ENCODE measurements at regions of chr4 and their contacts with region 1.

Region 1: DNA sequence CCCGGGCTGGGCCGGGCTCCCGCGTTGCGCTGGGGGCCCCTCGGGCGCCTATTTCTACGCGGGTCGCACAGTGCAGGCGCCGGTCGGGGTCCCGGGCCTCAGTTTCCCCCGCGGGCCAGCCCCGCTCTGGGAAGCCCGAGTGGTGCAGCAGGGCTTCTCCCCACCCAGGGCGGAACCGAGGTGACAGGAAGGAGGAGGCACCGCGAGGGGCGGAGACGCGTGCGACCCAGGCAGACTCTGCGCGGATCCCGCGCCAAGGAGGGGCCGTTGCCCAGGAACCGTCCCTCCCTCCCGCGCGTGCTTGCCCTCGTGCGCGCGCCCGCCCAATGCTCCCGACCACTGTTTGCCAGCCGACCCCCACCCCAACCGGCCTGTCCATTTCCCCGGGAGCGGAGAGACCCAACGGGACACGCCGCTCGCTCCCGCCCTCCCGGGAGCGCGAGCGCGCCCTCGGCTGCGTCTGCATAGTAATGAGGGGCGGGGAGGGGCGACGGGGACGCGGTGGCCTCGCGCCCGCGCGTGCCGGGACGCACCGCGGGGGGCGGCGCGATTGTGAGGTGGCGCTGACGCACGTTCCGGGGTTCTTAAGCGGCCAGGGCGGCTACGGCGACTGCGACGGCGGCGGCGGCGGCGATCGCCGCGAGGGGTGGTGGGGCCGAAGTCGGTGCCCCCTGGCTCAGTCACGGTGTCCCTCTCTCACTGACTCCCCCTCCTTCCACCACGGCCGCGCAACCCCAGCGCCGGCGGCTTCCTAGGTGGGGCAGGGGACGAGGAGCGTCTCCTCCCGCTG is at the start of gene CPEB2:
- DNase-seq: peak; percentile 81 to 96 (median 86)
- ATAC-seq: peak; percentile 83
- H3K4me3 ChIP-seq: peak within 1 kb of the TSS; percentile 89
- H3K27ac ChIP-seq: peak within 1 kb of the TSS; percentile 98
- H3K4me1 ChIP-seq: peaks cover 8 to 30% of the 10 kb centered on the region in 2 experiments; a peak in 3 of 5 replicates
- H3K27me3 ChIP-seq: no peaks in the 10 kb centered on the region
- CTCF ChIP-seq: no peak
- EP300 ChIP-seq: no peak
- POLR2A ChIP-seq: peak; percentile 86
- RAD21 ChIP-seq: 0 out of 4 replicates have a peak, but pooled peaks of 1 of the 2 experiments have one; percentile 2
- polyA plus RNA-seq, gene CPEB2: 0.39 to 0.41 TPM

Region 2: GRCh38 chr4:14856076-14856933 is 145.8 kb before region 1 on chr4:
- CTCF ChIA-PET with region 1: no interaction called
- POLR2A ChIA-PET with region 1: no interaction called
- in situ Hi-C with region 1: no loop called
- intact Hi-C with region 1: loop called (anchors 5 kb)
- DNase-seq: peak; percentile 71 to 89 (median 78)
- ATAC-seq: peak; percentile 98
- H3K4me3 ChIP-seq: no peak overlapping the region
- H3K27ac ChIP-seq: peak overlapping the region; percentile 88
- H3K4me1 ChIP-seq: peaks cover 0 to 28% of the 10 kb centered on the region in 2 experiments; a peak in 3 of 5 replicates
- H3K27me3 ChIP-seq: no peaks in the 10 kb centered on the region; a peak in 1 of 5 replicates
- CTCF ChIP-seq: no peak
- EP300 ChIP-seq: no peak
- POLR2A ChIP-seq: no peak
- RAD21 ChIP-seq: no peak

Region 3: DNA sequence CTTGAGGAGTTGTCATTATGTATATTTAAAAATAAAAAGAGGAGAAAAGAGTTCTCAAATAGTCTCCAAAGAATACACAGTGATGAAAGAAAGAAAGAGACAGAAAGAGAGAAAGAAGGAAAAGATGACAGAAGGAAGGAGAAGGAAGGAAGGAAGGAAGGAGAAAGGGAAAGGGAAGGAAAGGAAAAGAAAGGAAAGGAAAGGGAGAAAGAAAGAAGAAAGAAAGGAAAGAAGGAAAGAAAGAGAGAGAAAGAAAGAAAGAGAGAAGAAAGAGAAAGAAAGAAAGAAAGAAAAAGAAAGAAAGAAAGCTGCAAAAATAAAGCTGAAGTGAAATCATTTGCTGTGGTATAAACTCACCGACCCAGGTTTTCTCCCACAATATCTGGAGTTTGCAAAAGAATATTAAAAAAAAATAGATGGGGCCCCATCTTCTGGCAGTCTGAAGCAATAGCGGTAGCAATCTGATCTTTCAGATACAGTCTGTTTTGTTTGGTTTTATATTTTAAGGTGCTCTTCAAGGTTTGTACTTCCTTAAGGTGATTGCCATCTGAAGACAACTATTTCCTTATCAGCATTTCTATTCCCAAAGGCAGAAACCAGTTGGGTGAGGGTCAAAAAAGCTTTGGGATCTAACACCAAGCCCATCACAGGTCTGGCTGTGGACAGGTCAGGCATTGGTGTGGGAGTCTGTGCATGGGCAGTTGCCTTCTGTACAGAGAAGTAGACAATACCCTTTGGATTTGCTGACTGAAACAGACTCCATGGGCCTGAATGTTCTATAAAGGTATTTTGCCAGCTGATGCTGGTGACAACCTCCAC is 160.6 kb after region 1 on chr4:
- CTCF ChIA-PET with region 1: no interaction called
- POLR2A ChIA-PET with region 1: no interaction called
- in situ Hi-C with region 1: no loop called
- intact Hi-C with region 1: loop called (anchors 5 kb)
- DNase-seq: peak in 2 of 4 experiments; percentile 27 to 32
- ATAC-seq: peak; percentile 86
- H3K4me3 ChIP-seq: no peak overlapping the region
- H3K27ac ChIP-seq: no peak overlapping the region
- H3K4me1 ChIP-seq: peaks cover 5 to 6% of the 10 kb centered on the region in 2 experiments; a peak in 2 of 5 replicates
- H3K27me3 ChIP-seq: no peaks in the 10 kb centered on the region
- CTCF ChIP-seq: peak; percentile 20 to 65 (median 38); a peak in 4 of 6 replicates
- EP300 ChIP-seq: no peak
- POLR2A ChIP-seq: no peak
- RAD21 ChIP-seq: peak; percentile 18 to 64; a peak in 3 of 4 replicates

Region 4: DNA sequence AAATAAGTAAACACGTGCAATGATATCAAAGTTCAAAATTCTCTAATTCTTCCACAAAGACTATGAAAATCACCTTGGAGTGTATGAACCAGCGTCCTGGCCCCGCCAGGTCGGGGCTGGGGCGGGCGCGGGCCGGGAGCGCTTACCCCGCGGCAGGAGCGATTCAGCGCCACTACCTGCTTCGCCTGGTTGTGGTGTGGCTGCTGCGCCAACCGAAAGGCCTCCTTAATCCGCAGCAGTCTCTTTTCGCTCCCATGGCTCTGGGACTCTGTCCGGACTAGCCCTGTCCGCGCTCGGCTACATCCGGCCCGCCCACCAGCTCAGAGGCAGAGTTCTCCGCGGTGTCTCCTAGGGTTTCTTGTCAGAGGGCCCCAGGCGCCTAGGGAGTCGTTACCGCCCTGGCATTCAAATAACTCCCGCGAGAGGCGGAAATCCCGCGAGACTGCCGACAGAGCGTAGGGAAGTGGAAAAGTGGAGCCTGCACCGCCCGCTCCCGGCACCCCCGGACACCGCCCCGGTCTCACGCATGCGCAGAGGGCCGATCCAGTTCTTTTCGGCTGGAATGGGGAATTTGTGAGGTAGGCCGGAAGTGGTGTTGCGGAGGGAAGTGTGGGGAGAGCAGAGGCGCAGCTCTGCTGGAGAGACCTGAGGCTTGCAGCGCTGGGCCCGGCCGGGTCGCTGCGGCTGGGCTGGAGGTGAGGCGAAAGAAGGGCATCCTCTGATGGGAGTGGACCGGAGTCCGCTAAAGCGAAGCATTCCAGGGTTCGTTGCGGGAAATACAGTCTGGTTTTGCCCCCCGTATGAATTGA is 679.3 kb after region 1 on chr4 and contains the start of gene FAM200B:
- CTCF ChIA-PET with region 1: no interaction called
- POLR2A ChIA-PET with region 1: no interaction called
- in situ Hi-C with region 1: no loop called
- intact Hi-C with region 1: loop called (anchors 2 kb)
- DNase-seq: peak; percentile 99
- ATAC-seq: peak; percentile 88
- H3K4me3 ChIP-seq: peak within 1 kb of the TSS; percentile 67
- H3K27ac ChIP-seq: peak within 1 kb of the TSS; percentile 87
- H3K4me1 ChIP-seq: peaks cover 4 to 16% of the 10 kb centered on the region in 2 experiments; a peak in 4 of 5 replicates
- H3K27me3 ChIP-seq: no peaks in the 10 kb centered on the region
- CTCF ChIP-seq: peak in 2 of 3 experiments; percentile 13 to 47; a peak in 3 of 6 replicates
- EP300 ChIP-seq: no peak; the same call in 1 of the 2 replicates
- POLR2A ChIP-seq: peak; percentile 93
- RAD21 ChIP-seq: peak in 1 of 2 experiments; percentile 2; a peak in 2 of 4 replicates
- polyA plus RNA-seq, gene FAM200B: 23.2 to 27.6 TPM

Region 5: DNA sequence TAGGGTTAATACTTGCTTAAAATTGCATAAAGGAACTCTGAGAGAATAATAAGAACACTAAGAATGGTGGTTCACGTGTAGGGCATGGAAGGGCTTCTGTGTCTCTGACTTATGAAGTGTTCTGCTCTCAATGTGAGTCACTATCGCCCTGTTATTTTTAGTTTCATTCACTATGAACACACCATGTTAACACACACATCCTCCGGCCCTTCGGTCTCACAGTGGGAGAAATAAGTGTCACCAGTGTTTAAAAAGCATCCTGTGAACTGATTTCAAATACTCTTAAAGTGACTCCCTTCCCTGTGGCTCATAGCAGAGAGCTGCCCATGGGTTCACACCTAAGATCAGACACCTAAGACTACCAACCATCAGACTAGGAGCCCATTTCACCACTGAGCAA is 994.7 kb after region 1 on chr4:
- CTCF ChIA-PET with region 1: no interaction called
- POLR2A ChIA-PET with region 1: no interaction called
- in situ Hi-C with region 1: no loop called
- intact Hi-C with region 1: no loop called
- DNase-seq: no peak
- ATAC-seq: no peak
- H3K4me3 ChIP-seq: no peak overlapping the region
- H3K27ac ChIP-seq: no peak overlapping the region
- H3K4me1 ChIP-seq: no peaks in the 10 kb centered on the region
- H3K27me3 ChIP-seq: peaks cover 3 to 25% of the 10 kb centered on the region in 2 experiments; a peak in 3 of 5 replicates
- CTCF ChIP-seq: no peak
- EP300 ChIP-seq: no peak
- POLR2A ChIP-seq: no peak
- RAD21 ChIP-seq: no peak